ENCODE measurements at regions of chr9 and their contacts with region 1.

Region 1: GRCh38 chr9:114385412-114386181 is 2.2 kb downstream of the AKNA start:
- DNase-seq: peak; percentile 92 to 98 (median 97)
- H3K4me3 ChIP-seq: peak overlapping the region; percentile 68 to 89 (median 88)
- H3K4me3 Mint-ChIP-seq: peak overlapping the region; percentile 97 to 98
- H3K27ac ChIP-seq: peak overlapping the region; percentile 98 to 100
- H3K27ac Mint-ChIP-seq: peak overlapping the region; percentile 96 to 100 (median 99)
- H3K4me1 ChIP-seq: peaks cover 79 to 86% of the 10 kb centered on the region in 2 donors
- H3K4me1 Mint-ChIP-seq: peaks cover 74% of the 10 kb centered on the region
- H3K27me3 ChIP-seq: no peaks in the 10 kb centered on the region
- H3K27me3 Mint-ChIP-seq: no peaks in the 10 kb centered on the region
- CTCF ChIP-seq: no peak

Region 2: DNA sequence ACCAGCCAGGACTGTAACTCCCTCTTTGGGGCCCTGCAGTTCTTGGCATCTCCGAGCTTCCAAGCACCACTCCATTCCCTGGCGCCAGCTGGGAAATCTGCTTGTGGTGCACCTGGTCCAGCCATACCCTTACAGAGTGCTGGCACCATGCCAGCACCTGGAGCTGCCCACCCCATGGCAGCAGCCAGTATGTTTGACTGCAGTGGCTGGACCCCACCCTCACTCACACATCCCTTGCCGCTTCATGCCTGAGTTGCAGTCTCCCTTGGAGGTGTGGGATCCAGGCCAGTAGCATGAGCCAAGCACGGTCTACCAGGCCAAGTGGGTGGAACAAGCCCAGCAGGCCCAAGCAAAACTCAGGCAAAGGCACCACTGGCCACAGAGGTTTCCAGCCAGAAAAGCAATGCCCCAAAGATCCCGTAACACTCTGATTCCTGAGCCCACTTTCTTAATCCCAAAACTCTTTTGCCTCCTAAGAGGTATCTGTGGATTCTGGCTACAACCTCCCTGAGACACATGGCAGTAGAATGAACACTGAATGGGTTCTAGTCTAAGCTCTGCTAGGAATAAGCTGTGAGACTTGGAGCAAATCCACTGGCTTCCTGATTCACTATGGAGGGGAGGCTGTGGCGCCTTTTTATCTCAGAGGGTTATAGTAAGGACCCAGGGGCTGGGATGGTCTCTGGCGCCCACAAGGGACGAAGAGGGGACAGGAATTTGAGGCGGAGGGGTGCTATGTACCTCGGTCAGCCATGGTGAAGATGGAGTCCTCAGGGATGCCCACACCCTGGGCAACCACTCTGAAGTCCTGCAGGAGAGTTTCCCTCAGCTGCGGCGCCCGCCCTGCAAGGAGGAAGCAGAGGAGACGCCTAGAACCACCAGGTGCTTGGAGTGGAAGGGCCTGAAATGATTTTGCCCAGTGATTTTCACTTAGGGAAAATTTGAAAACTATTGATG is 313.1 kb before region 1 on chr9:
- intact Hi-C with region 1: no loop called
- DNase-seq: no peak
- H3K4me3 ChIP-seq: no peak overlapping the region
- H3K4me3 Mint-ChIP-seq: no peak overlapping the region
- H3K27ac ChIP-seq: no peak overlapping the region
- H3K27ac Mint-ChIP-seq: peak overlapping the region in 1 of 7 donors; percentile 66
- H3K4me1 ChIP-seq: no peaks in the 10 kb centered on the region
- H3K4me1 Mint-ChIP-seq: no peaks in the 10 kb centered on the region
- H3K27me3 ChIP-seq: peaks cover 0 to 9% of the 10 kb centered on the region in 2 donors
- H3K27me3 Mint-ChIP-seq: peaks cover 7 to 23% (median 9%) of the 10 kb centered on the region in 3 donors
- CTCF ChIP-seq: no peak

Region 3: DNA sequence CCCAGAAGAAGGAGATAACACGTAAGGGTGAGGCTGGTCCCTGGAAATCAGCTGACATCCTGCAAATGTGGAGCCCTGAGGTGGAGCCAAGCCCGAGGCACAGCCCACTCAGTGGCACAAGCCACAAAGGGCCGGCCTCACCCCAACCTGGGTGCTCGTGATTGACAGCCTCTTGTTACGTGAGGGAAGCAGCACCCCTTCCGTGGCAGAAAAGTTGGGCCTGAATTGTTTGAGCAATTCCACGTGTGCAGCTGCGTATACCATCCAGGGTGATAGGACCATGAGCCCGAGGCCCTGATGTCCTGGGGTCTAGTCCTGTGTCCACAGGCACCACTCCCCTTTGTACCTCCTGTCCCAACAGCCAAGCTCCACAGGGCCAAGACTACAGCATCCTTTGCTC is 51.1 kb before region 1 on chr9:
- intact Hi-C with region 1: no loop called
- DNase-seq: no peak
- H3K4me3 ChIP-seq: no peak overlapping the region
- H3K4me3 Mint-ChIP-seq: no peak overlapping the region
- H3K27ac ChIP-seq: no peak overlapping the region
- H3K27ac Mint-ChIP-seq: peak overlapping the region in 3 of 7 donors; percentile 4 to 42 (median 40)
- H3K4me1 ChIP-seq: no peaks in the 10 kb centered on the region
- H3K4me1 Mint-ChIP-seq: peaks cover 4% of the 10 kb centered on the region
- H3K27me3 ChIP-seq: no peaks in the 10 kb centered on the region
- H3K27me3 Mint-ChIP-seq: peaks cover 0 to 6% (median 3%) of the 10 kb centered on the region in 3 donors
- CTCF ChIP-seq: no peak

Region 4: DNA sequence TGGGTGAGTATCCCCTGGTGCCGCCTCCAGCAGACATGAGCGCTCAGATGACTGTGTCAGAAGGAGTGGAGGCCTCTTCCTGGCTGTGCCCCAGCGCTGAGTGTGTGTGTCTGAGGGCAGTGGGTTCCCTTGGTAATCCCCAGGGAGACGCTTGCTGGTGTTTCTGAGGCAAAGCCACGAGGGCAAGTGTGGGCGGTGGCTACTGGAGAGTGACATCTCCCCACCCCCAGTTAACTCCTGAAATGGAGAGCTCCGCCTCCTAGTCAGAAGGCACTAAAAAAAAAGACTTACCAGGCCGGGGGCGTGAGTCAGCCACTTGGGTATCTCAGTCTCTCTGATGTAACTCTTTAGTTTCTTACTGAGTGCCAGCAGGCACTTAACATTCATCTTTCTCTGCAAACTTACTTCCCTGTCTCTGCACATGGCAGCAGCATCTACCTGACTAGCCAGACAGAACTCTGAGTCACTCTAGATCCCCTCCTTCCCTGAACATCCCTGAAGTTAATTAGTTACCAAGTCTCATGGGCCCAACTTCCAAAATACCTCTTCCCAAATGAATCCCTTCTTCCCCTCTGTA is 36.6 kb before region 1 on chr9:
- intact Hi-C with region 1: loop called (anchors 5 to 10 kb)
- DNase-seq: peak; percentile 50 to 71 (median 64)
- H3K4me3 ChIP-seq: no peak overlapping the region
- H3K4me3 Mint-ChIP-seq: no peak overlapping the region
- H3K27ac ChIP-seq: peak overlapping the region in 1 of 2 donors; percentile 69
- H3K27ac Mint-ChIP-seq: peak overlapping the region; percentile 72 to 91 (median 85)
- H3K4me1 ChIP-seq: no peaks in the 10 kb centered on the region
- H3K4me1 Mint-ChIP-seq: peaks cover 17% of the 10 kb centered on the region
- H3K27me3 ChIP-seq: no peaks in the 10 kb centered on the region
- H3K27me3 Mint-ChIP-seq: peaks cover 0 to 2% (median 0%) of the 10 kb centered on the region in 3 donors
- CTCF ChIP-seq: no peak

Region 5: DNA sequence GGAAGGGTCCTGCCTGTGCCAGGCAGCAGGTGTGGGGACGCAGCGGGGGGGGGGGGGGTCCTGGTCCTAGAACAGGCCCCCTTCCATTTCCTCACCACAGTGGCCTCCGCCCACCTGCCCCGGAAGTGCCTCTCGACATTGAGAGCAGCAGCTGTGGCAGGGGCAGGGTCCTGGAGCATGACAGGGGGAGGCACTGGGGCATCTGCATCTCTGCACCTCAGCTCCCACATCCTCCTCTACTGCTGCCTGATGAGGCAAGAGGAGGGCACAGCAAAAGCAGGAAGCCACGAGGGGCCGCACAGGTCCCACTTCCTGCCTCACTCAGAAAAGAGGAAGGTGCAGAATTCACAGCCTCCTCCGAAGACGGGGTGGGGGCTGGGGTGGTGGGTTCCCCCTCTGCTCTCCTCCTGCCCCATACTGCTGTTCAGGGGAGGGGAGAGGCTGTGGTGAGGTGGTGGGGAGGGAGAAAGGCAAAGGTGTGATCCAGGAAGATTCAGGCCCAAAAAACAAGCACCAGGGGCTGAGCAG is 12.6 kb before region 1 on chr9:
- intact Hi-C with region 1: loop called in 1 of 2 experiments (anchors 2 kb)
- DNase-seq: peak; percentile 89 to 95 (median 93)
- H3K4me3 ChIP-seq: peak overlapping the region in 2 of 3 experiments; percentile 7 to 66
- H3K4me3 Mint-ChIP-seq: peak overlapping the region; percentile 69 to 88
- H3K27ac ChIP-seq: peak overlapping the region; percentile 85 to 86
- H3K27ac Mint-ChIP-seq: peak overlapping the region; percentile 97 to 99 (median 98)
- H3K4me1 ChIP-seq: peaks cover 94 to 98% of the 10 kb centered on the region in 2 donors
- H3K4me1 Mint-ChIP-seq: peaks cover 89% of the 10 kb centered on the region
- H3K27me3 ChIP-seq: no peaks in the 10 kb centered on the region
- H3K27me3 Mint-ChIP-seq: no peaks in the 10 kb centered on the region
- CTCF ChIP-seq: no peak

Measured in CD14-positive monocyte (primary cell).